Sigmoid colon (tissue), 7 donors: ENCODE measurements at regions of chr19 and their contacts with region 1.

Region 1: DNA sequence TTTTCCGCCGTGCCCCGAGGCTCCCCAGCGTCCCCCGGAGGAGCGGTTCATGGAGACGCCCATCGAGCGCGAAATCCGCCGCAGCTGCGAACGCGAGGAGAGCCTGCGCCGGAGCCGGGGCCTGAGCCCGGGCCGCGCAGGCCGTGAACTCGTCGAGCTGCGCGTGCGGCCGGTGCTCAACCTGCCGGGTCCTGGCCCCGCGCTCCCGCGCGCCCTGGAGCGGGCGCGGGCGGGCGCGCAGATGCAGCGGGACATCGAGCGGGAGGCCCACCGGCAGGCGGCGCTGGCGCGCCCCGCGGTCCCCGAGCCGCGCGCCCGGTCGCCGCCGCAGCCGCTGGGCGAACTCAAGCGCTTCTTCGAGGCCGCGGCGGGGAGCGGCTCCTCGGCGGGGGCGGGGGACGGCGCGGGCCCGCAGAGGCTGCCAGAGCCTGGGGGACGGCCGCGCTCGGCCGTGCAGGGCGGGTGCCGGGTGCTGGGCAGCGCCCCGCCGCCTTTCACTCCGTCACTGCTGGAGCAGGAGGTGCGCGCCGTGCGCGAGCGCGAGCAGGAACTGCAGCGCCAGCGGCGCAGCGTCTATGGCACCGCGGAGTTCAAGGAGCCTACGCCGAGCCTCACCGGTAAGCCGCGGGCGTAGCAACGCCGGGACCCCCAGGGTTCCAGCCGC is 807 bp downstream of the MISP3 start:
- DNase-seq: peak; percentile 82
- H3K4me3 ChIP-seq: peak overlapping the region; percentile 42 to 77 (median 62)
- H3K27ac ChIP-seq: peak overlapping the region; percentile 87 to 93 (median 91)
- H3K4me1 ChIP-seq: peaks cover 0 to 41% (median 38%) of the 10 kb centered on the region in 4 donors
- H3K27me3 ChIP-seq: no peaks in the 10 kb centered on the region
- CTCF ChIP-seq: peak in 1 of 4 experiments; percentile 41
- EP300 ChIP-seq: no peak
- POLR2A ChIP-seq: no peak

Region 2: DNA sequence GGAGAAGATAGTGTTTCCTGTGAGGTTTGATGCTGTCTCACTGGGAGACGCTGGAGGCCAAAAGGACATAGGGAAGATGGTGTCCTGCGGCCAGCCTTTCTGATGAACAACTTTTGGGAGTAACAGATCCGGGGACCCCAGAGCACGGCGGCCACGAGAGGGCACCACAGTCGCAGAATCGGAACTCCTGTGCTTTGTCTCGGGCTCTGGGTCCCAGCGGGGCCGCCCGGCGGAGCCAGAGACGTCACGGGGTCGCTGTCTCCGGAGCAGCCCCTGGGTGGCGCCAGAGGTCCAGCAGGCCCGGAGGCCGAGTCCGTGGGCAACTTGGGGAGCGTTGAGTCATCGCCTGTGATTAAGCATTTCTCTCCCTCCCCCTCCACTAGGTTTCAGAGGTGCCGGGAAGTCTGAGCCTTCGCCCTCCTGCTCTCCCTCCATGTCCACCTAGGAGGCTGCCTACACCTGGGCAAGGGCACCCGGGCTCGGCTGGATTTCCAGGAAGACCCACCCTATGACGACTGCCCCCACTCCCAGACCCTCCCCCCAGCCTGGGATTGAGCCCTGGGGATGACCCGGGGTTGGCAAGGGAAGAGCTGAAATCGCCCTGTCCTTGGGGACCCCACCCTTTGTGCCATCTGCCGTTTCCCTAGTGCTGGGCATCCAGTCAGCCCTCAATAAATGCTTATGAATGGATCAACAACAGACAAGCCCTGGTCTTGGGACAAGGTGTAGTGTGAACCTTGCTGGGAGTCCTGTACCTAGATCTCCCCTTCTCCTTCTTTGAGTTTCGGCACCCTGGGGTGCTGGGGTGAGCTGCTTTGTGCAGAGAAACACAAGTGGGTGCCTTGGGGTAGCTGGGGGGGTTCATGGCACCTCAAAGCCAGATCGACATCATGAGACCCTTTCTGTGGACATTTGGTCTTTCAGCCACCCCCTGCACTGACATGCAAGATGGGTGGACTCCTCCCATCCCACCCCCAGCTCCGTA is 193.0 kb before region 1 on chr19:
- intact Hi-C with region 1: loop called (anchors 1 kb)
- DNase-seq: peak; percentile 99
- H3K4me3 ChIP-seq: peak overlapping the region in 3 of 4 donors; percentile 24 to 37 (median 33)
- H3K27ac ChIP-seq: peak overlapping the region; percentile 67 to 76 (median 72)
- H3K4me1 ChIP-seq: peaks cover 0 to 30% (median 18%) of the 10 kb centered on the region in 4 donors
- H3K27me3 ChIP-seq: no peaks in the 10 kb centered on the region
- CTCF ChIP-seq: peak; percentile 98 to 100 (median 99)
- EP300 ChIP-seq: peak in 1 of 4 donors; percentile 20
- POLR2A ChIP-seq: no peak

Region 3: GRCh38 chr19:14006243-14006765 is 67.1 kb before region 1 on chr19 and contains the start of gene RFX1:
- intact Hi-C with region 1: loop called (anchors 2 kb)
- DNase-seq: peak; percentile 100
- H3K4me3 ChIP-seq: peak within 1 kb of the TSS; percentile 73 to 97 (median 96)
- H3K27ac ChIP-seq: peak within 1 kb of the TSS; percentile 98 to 100 (median 99)
- H3K4me1 ChIP-seq: peaks cover 0 to 30% (median 24%) of the 10 kb centered on the region in 4 donors
- H3K27me3 ChIP-seq: no peaks in the 10 kb centered on the region
- CTCF ChIP-seq: no peak
- EP300 ChIP-seq: peak in 1 of 4 donors; percentile 46
- POLR2A ChIP-seq: no peak
- total RNA-seq, gene RFX1: 1.6 to 5.0 (median 1.9) TPM

Region 4: GRCh38 chr19:14117668-14118164 is 44.3 kb after region 1 on chr19 and contains the start of gene PRKACA:
- intact Hi-C with region 1: loop called (anchors 2 kb)
- DNase-seq: peak; percentile 100
- H3K4me3 ChIP-seq: peak within 1 kb of the TSS; percentile 72 to 99 (median 98)
- H3K27ac ChIP-seq: peak within 1 kb of the TSS; percentile 97 to 100 (median 100)
- H3K4me1 ChIP-seq: peaks cover 0 to 62% (median 59%) of the 10 kb centered on the region in 4 donors
- H3K27me3 ChIP-seq: no peaks in the 10 kb centered on the region
- CTCF ChIP-seq: no peak
- EP300 ChIP-seq: no peak
- POLR2A ChIP-seq: peak in 1 of 2 donors; percentile 17
- total RNA-seq, gene PRKACA: 33.6 to 36.6 (median 35.2) TPM

Region 5: GRCh38 chr19:14136509-14137281 is 63.3 kb after region 1 on chr19 and contains the start of gene ASF1B:
- intact Hi-C with region 1: loop called (anchors 2 kb)
- DNase-seq: peak; percentile 100
- H3K4me3 ChIP-seq: peak within 1 kb of the TSS; percentile 65 to 88 (median 76)
- H3K27ac ChIP-seq: peak within 1 kb of the TSS; percentile 95 to 98 (median 96)
- H3K4me1 ChIP-seq: peaks cover 0 to 28% (median 27%) of the 10 kb centered on the region in 4 donors
- H3K27me3 ChIP-seq: no peaks in the 10 kb centered on the region
- CTCF ChIP-seq: peak; percentile 66 to 92 (median 76)
- EP300 ChIP-seq: no peak
- POLR2A ChIP-seq: peak; percentile 14 to 72
- total RNA-seq, gene ASF1B: 1.1 to 2.0 (median 1.4) TPM in 3 of 4 donors, not detected in the other

Region 6: GRCh38 chr19:14405758-14406644 is 332.6 kb after region 1 on chr19:
- intact Hi-C with region 1: no loop called
- DNase-seq: peak; percentile 93
- H3K4me3 ChIP-seq: peak overlapping the region; percentile 8 to 36 (median 24)
- H3K27ac ChIP-seq: peak overlapping the region; percentile 65 to 82 (median 76)
- H3K4me1 ChIP-seq: peaks cover 0 to 16% (median 9%) of the 10 kb centered on the region in 4 donors
- H3K27me3 ChIP-seq: no peaks in the 10 kb centered on the region
- CTCF ChIP-seq: peak; percentile 84 to 93 (median 90)
- EP300 ChIP-seq: no peak
- POLR2A ChIP-seq: no peak